ENCODE measurements at regions of chr3 and their contacts with region 1.

Region 1: DNA sequence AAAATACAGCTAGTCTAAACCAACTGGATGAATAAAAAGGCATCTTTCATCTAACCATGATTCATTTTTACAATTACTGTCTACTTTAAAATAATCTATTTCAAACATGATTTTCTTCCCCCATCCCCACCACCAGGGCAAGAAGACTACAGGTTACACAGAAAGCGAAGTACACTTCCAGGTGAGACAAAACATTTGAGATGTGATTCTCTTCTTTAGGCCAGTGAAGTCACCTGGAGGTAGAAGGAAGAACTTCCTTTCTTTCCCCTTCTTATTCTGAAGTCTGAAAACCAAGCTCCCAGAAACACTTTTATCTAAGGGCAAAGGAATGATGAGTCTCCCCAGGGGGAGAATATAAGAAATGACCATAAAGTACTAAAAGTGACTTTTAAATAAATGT is 36.7 kb downstream of the SHQ1 start:
- DNase-seq: no peak
- ATAC-seq: peak; percentile 70
- H3K4me3 Mint-ChIP-seq: peak overlapping the region; percentile 8; the same call in 1 of the 2 replicates
- H3K27ac Mint-ChIP-seq: peak overlapping the region; percentile 90
- H3K4me1 Mint-ChIP-seq: peaks cover 52% of the 10 kb centered on the region
- H3K27me3 Mint-ChIP-seq: no peaks in the 10 kb centered on the region
- CTCF ChIP-seq: no peak

Region 2: DNA sequence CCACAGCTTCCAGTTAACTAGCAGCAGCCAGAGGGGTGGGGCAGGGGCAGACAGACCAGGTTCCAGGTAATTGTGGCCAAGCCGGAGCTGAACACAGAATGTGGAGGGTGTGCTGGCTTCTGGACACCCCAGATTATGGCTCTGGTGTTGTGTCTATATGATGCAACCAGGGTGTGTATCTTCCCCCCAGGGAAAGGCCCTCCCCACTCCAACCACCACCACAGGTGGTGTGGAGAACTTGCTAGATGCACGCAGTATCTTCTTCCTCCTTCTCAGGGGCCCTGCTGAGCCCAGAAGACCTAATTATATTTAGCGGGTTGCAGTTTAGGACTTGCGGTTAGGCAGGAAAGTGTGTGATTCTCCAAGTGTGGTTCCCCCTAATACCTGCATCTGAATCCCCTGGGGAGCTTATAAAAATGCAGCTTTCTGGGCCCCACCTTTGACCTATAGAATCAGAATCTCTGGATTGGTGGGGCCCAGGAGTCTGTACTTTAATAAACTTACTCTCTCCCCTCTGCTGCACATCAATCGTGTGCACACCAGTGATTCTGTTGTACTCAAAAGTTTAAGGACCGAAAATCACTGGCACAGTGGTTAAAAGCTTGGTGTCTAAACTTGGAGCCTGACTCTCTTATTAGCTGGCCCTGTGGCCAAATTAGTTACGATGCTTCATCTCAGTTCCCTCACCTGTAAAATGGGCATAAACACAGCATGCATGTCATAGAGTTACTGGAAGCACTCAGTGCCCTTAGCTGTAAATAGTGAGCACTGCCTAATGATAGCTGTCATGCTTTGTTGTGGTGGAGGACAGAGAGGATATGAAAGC is 647.5 kb before region 1 on chr3:
- CTCF ChIA-PET with region 1: no interaction called
- POLR2A ChIA-PET with region 1: no interaction called
- DNase-seq: no peak
- ATAC-seq: no peak
- H3K4me3 Mint-ChIP-seq: no peak overlapping the region
- H3K27ac Mint-ChIP-seq: no peak overlapping the region
- H3K4me1 Mint-ChIP-seq: peaks cover 17% of the 10 kb centered on the region
- H3K27me3 Mint-ChIP-seq: no peaks in the 10 kb centered on the region
- CTCF ChIP-seq: no peak

Region 3: DNA sequence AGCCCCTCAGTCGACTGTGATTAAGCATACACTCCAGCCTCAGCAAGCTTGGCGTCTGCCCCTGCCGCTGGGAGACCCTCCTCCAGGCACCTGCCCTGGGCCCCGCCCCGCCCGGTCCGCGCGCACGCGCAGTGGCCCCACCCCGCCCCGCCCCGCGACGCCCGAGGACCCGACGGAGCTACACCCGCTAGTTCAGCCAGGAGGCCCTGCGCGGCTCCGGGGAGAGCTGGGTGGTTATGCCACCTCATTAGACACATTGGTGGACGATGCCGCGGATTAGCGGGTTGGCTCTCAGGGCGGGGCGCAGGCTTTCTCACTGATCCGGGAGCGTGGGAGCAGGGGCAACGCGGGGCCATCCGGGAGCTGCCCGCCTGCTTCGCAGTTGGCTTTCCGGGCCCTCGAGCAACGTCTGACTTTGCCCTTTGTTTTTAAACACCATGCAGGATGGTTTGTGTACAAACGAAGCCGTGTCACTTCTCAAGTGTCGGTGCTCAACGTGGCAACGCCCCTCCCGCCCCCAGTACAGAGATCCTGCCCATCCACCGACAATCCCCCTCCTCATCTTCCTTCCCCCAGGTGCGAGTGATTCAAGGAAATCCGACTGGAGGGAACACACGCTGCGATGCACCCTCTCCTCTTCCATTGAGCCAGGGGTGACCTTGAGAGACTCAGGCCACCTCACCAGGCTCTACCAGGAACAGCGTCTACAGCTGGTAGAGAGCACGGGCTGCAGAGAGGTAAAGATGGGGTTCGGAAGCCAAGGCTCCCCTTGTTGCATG is 72.6 kb before region 1 on chr3:
- CTCF ChIA-PET with region 1: interaction called, 13 read pairs
- POLR2A ChIA-PET with region 1: no interaction called
- DNase-seq: peak; percentile 69
- ATAC-seq: peak; percentile 95
- H3K4me3 Mint-ChIP-seq: peak overlapping the region; percentile 76
- H3K27ac Mint-ChIP-seq: no peak overlapping the region
- H3K4me1 Mint-ChIP-seq: peaks cover 22% of the 10 kb centered on the region
- H3K27me3 Mint-ChIP-seq: peaks cover 30% of the 10 kb centered on the region
- CTCF ChIP-seq: no peak

Region 4: GRCh38 chr3:72973031-72973723 is 161.6 kb after region 1 on chr3:
- CTCF ChIA-PET with region 1: no interaction called
- POLR2A ChIA-PET with region 1: no interaction called
- DNase-seq: no peak
- ATAC-seq: no peak
- H3K4me3 Mint-ChIP-seq: no peak overlapping the region
- H3K27ac Mint-ChIP-seq: no peak overlapping the region; the same call in 1 of the 2 replicates
- H3K4me1 Mint-ChIP-seq: peaks cover 27% of the 10 kb centered on the region
- H3K27me3 Mint-ChIP-seq: no peaks in the 10 kb centered on the region
- CTCF ChIP-seq: no peak

Measured in WTC11 (cell line).